PC-3 (cell line): ENCODE measurements at regions of chr4 and their contacts with region 1.

Region 1: DNA sequence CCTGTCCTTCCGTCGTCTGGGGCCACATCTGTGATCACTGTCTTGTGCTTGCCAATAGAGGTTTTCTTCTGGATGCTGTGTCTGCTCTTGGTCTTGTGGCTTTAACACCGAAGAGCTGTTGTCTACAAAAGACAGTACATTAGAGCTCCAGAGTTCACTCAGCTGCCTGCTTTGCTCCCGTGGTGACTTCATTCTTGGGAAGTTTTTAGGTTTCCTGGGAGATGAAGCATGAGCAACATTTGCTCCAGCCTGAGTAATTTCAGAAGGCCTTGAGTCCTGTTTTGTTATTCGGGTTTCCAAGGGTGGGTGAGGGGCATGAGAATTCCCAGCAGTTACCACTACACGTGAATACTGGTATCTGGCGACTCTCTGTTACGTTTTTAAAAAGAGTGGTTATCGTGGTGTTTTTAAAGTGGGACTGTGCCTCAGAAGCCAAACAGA is 189.2 kb downstream of the SHROOM3 start:
- DNase-seq: peak; percentile 78
- ATAC-seq: peak; percentile 21; the same call in 1 of the 2 replicates
- H3K4me3 ChIP-seq: peak overlapping the region; percentile 55; the same call in 1 of the 2 replicates
- H3K27ac ChIP-seq: peak overlapping the region; percentile 98
- H3K4me1 ChIP-seq: peaks cover 49% of the 10 kb centered on the region
- H3K27me3 ChIP-seq: no peaks in the 10 kb centered on the region
- CTCF ChIP-seq: no peak

Region 2: GRCh38 chr4:76550966-76551780 is 73.1 kb before region 1 on chr4:
- CTCF ChIA-PET with region 1: no interaction called
- POLR2A ChIA-PET with region 1: no interaction called
- intact Hi-C with region 1: loop called (anchors 2 kb)
- DNase-seq: peak; percentile 70
- ATAC-seq: peak; percentile 61
- H3K4me3 ChIP-seq: no peak overlapping the region
- H3K27ac ChIP-seq: peak overlapping the region; percentile 69
- H3K4me1 ChIP-seq: peaks cover 23% of the 10 kb centered on the region
- H3K27me3 ChIP-seq: no peaks in the 10 kb centered on the region
- CTCF ChIP-seq: no peak

Region 3: GRCh38 chr4:76570141-76570973 is 53.9 kb before region 1 on chr4:
- CTCF ChIA-PET with region 1: no interaction called
- POLR2A ChIA-PET with region 1: no interaction called
- intact Hi-C with region 1: loop called (anchors 2 kb)
- DNase-seq: peak; percentile 86
- ATAC-seq: peak; percentile 85
- H3K4me3 ChIP-seq: peak overlapping the region; percentile 35
- H3K27ac ChIP-seq: peak overlapping the region; percentile 79
- H3K4me1 ChIP-seq: peaks cover 26% of the 10 kb centered on the region
- H3K27me3 ChIP-seq: no peaks in the 10 kb centered on the region
- CTCF ChIP-seq: no peak

Region 4: DNA sequence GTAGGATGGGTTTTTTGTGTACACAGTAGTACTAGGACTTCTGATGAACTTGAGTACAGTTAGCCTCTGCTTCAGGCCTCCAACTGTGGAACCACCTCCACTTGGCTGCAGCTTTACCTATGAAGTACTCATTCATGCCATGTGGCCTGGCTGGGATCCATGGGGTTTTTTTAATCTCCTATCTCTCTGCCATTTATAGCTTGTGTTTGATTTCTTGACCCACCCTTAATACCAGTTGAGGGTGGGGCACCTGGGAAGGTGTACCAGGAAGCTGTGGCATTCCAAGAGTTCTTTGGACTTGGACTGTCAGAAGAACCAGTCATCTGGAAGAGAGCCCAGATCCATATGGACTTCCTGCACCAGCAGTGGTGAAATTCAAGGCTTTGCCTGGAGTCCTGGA is 40.9 kb after region 1 on chr4:
- CTCF ChIA-PET with region 1: no interaction called
- POLR2A ChIA-PET with region 1: interaction called, 4 read pairs
- intact Hi-C with region 1: loop called (anchors 2 kb)
- DNase-seq: peak; percentile 97
- ATAC-seq: peak; percentile 90
- H3K4me3 ChIP-seq: no peak overlapping the region
- H3K27ac ChIP-seq: peak overlapping the region; percentile 87
- H3K4me1 ChIP-seq: peaks cover 42% of the 10 kb centered on the region
- H3K27me3 ChIP-seq: no peaks in the 10 kb centered on the region
- CTCF ChIP-seq: no peak

Region 5: DNA sequence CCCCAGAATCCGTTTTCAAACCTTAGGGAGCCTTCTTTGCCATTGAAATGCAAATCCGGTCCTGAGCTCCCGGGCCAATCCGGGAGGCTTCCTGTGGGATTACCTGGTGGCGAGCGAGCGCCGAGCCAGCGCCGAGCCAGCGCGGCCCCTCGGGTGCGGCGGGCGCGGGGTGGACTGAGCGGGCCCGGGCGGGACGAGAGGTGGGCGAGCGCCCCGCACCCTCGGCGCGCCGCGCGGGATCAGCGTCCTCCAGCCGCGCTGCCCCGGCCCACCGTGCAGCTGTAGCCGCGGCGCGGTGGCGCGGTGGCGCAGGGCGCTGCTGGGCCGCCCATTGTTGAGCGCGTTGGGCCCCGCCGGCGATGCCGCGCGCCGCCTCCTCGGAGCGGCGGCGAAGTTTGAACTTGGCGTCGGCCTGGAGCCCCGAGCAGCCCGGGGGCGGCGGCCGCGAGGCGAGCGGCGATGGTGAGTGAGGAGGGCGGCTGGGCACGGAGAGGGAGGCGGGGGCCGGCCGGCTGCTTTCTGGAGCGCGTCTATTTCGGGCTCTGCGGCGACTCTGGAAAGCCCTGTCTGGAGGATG is 65.1 kb after region 1 on chr4:
- CTCF ChIA-PET with region 1: no interaction called
- POLR2A ChIA-PET with region 1: no interaction called
- intact Hi-C with region 1: loop called (anchors 2 kb)
- DNase-seq: peak; percentile 65
- ATAC-seq: peak; percentile 54
- H3K4me3 ChIP-seq: peak overlapping the region; percentile 85
- H3K27ac ChIP-seq: peak overlapping the region; percentile 71
- H3K4me1 ChIP-seq: peaks cover 41% of the 10 kb centered on the region
- H3K27me3 ChIP-seq: no peaks in the 10 kb centered on the region
- CTCF ChIP-seq: no peak

Region 6: DNA sequence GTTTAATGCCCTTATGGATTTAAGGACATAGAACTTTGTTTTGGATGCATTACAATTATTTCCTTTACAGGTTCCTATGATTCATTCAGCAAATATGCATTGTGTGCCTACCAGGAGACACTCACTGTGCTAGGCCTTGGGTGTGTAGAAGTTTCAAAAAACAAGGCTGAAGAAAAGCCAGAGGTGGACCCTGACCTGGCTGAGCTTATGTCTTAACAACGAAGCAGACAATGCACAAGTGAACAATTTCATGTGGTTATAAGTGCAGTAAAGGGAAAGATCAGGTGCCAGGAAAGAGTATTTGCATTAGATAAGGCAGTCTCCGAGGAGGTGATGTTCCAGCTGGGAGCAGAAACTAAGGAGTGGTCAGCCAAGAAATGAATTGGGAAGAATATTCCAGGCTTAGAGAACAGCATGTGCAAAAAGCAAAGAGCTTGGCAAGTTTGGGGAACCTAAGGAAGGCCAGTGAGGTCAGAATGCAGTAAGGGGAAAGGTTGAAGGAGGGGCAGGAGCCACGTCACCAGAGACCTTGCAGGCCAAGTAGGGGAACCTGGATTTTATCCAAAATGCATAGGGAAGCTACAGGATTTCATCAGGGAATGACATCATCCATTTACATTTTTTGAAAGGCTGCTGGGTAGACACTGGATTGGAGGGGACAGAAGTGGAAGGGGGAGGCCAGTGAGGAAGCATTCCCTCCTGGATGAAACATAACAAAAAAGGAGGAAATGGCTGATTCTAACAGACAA is 80.0 kb after region 1 on chr4:
- CTCF ChIA-PET with region 1: no interaction called
- POLR2A ChIA-PET with region 1: no interaction called
- intact Hi-C with region 1: loop called (anchors 5 kb)
- DNase-seq: peak; percentile 88
- ATAC-seq: peak; percentile 81
- H3K4me3 ChIP-seq: peak overlapping the region; percentile 44; the same call in 1 of the 2 replicates
- H3K27ac ChIP-seq: peak overlapping the region; percentile 99
- H3K4me1 ChIP-seq: peaks cover 61% of the 10 kb centered on the region
- H3K27me3 ChIP-seq: no peaks in the 10 kb centered on the region
- CTCF ChIP-seq: no peak